ENCODE measurements at regions of chr2 and their contacts with region 1.

Region 1: GRCh38 chr2:198309673-198310280 is 505.4 kb downstream of the PLCL1 start:
- DNase-seq: no peak
- H3K4me3 ChIP-seq: no peak overlapping the region
- CTCF ChIP-seq: peak; percentile 72

Region 2: DNA sequence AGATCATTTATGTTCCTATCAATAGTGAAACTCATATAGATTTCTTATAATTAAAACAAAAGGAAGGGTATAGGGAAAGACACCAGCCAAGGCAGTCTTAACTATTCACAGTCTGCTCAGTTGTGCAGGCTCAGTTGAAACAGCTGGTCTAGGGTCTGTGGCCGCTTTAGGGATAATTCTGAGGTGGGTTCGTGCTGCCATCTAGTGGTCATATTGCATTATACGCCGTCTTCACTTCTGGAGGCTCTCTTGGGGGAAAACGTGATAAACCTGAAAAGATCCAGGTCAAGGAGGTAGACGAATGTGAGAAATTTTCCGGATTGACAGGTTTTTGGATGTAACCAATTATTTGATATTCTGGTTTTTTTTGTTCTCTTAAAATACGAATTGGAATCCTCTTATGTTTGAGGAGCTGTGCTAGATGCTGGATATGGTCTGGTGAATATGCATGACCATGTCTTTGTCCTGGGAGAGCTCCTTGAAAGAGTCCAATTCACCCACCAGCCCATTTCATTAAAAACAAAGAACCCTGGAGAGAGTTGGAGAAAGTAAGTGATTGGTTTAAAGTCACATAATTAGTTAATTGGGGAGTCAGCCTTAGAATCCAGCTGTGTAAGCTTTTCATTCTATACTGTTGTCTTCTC is 13.0 kb before region 1 on chr2:
- CTCF ChIA-PET with region 1: interaction called, 31 read pairs
- POLR2A ChIA-PET with region 1: no interaction called
- DNase-seq: no peak
- H3K4me3 ChIP-seq: no peak overlapping the region
- CTCF ChIP-seq: peak; percentile 67

Region 3: GRCh38 chr2:198657512-198658121 is 347.8 kb after region 1 on chr2:
- CTCF ChIA-PET with region 1: interaction called, 13 read pairs
- POLR2A ChIA-PET with region 1: no interaction called
- DNase-seq: no peak
- H3K4me3 ChIP-seq: no peak overlapping the region
- CTCF ChIP-seq: peak; percentile 47

Region 4: GRCh38 chr2:199471443-199472057 is 1161.8 kb after region 1 on chr2:
- CTCF ChIA-PET with region 1: interaction called, 12 read pairs
- POLR2A ChIA-PET with region 1: interaction called, 3 read pairs
- DNase-seq: no peak
- H3K4me3 ChIP-seq: peak overlapping the region; percentile 43
- CTCF ChIP-seq: peak; percentile 94

Region 5: DNA sequence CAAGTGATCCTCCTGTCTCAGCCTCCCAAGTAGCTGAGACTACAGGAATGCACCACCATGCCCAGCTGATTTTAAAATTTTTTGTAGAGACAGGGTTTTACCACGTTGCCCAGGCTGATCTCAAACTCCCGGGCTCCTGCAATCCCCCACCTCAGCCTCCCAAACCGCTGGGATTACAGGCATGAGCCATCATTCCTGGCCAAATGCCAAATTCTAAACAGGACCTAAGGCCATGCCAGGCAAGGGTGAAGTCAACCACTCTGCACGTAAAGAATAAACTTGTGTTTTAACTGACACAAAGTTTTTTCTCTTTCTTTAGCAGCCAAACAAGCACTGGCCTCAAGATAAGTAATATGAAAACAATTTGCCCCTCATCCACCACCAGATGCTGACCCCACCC is 1185.4 kb after region 1 on chr2:
- CTCF ChIA-PET with region 1: interaction called, 348 read pairs
- POLR2A ChIA-PET with region 1: no interaction called
- DNase-seq: no peak
- H3K4me3 ChIP-seq: no peak overlapping the region
- CTCF ChIP-seq: no peak